ENCODE measurements at regions of chr1 and their contacts with region 1.

Region 1: DNA sequence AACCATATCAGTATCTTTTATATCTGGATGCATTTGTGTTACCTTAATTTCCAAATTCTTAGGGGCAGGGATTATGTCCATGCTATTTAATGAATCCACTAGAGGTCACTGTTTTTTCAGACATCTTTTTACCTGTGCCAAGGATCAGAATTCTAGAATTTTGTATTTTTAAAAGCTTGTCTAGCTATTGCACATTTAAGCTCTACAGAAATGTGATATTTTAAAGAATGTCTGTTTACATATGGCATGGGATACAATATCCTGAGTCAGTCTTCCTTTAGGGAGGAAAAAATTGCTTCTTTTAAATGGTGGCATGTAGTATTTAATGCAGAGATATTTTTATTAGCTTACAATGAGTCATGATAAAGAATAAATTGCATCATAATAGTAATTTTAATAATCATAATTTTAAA is 11.3 kb downstream of the RPAP2 start:
- DNase-seq: peak in 2 of 5 donors; percentile 29 to 31
- H3K4me3 ChIP-seq: no peak overlapping the region
- H3K4me3 Mint-ChIP-seq: no peak overlapping the region
- H3K27ac ChIP-seq: no peak overlapping the region
- H3K27ac Mint-ChIP-seq: peak overlapping the region in 4 of 8 donors; percentile 3 to 66 (median 23)
- H3K4me1 ChIP-seq: peaks cover 28% of the 10 kb centered on the region
- H3K4me1 Mint-ChIP-seq: peaks cover 33 to 44% (median 44%) of the 10 kb centered on the region in 3 donors
- H3K27me3 ChIP-seq: no peaks in the 10 kb centered on the region
- H3K27me3 Mint-ChIP-seq: no peaks in the 10 kb centered on the region

Region 2: GRCh38 chr1:91553200-91553621 is 757.0 kb before region 1 on chr1:
- CTCF ChIA-PET with region 1: no interaction called
- POLR2A ChIA-PET with region 1: no interaction called
- DNase-seq: no peak
- H3K4me3 ChIP-seq: no peak overlapping the region
- H3K4me3 Mint-ChIP-seq: no peak overlapping the region
- H3K27ac ChIP-seq: no peak overlapping the region
- H3K27ac Mint-ChIP-seq: peak overlapping the region; percentile 12 to 99 (median 90)
- H3K4me1 ChIP-seq: peaks cover 93% of the 10 kb centered on the region
- H3K4me1 Mint-ChIP-seq: peaks cover 96 to 100% (median 100%) of the 10 kb centered on the region in 3 donors
- H3K27me3 ChIP-seq: no peaks in the 10 kb centered on the region
- H3K27me3 Mint-ChIP-seq: no peaks in the 10 kb centered on the region

Region 3: DNA sequence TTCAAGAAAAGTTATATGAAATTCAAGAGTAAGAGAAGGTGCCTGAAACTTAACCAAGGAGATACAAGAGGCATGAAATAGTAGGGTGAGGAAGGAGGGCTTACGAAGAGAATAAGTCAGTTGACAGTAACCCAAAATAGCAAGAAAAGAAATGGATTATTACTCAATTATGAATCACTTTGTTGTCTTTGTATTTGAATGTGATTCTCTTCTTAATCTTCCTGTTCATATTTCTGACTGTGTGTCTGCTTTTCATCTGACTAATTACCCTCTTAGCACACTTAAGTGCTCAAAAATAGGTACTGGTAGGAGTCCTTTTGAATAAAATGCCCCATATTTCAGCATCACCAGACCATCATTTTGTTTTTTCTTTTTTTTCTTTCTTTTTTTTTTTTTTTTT is 50.8 kb before region 1 on chr1:
- CTCF ChIA-PET with region 1: no interaction called
- POLR2A ChIA-PET with region 1: no interaction called
- DNase-seq: no peak
- H3K4me3 ChIP-seq: no peak overlapping the region
- H3K4me3 Mint-ChIP-seq: no peak overlapping the region
- H3K27ac ChIP-seq: no peak overlapping the region
- H3K27ac Mint-ChIP-seq: peak overlapping the region in 1 of 8 donors; percentile 14
- H3K4me1 ChIP-seq: no peaks in the 10 kb centered on the region
- H3K4me1 Mint-ChIP-seq: peaks cover 0 to 16% (median 6%) of the 10 kb centered on the region in 3 donors
- H3K27me3 ChIP-seq: no peaks in the 10 kb centered on the region
- H3K27me3 Mint-ChIP-seq: peaks cover 0 to 3% of the 10 kb centered on the region in 2 donors

Region 4: GRCh38 chr1:92599184-92599583 is 289.0 kb after region 1 on chr1:
- CTCF ChIA-PET with region 1: interaction called, 19 read pairs
- POLR2A ChIA-PET with region 1: no interaction called
- DNase-seq: peak in 2 of 5 donors; percentile 17 to 43
- H3K4me3 ChIP-seq: no peak overlapping the region
- H3K4me3 Mint-ChIP-seq: no peak overlapping the region
- H3K27ac ChIP-seq: no peak overlapping the region
- H3K27ac Mint-ChIP-seq: no peak overlapping the region
- H3K4me1 ChIP-seq: no peaks in the 10 kb centered on the region
- H3K4me1 Mint-ChIP-seq: peaks cover 0 to 2% (median 0%) of the 10 kb centered on the region in 3 donors
- H3K27me3 ChIP-seq: no peaks in the 10 kb centered on the region
- H3K27me3 Mint-ChIP-seq: no peaks in the 10 kb centered on the region

Measured in CD8-positive, alpha-beta memory T cell (primary cell).